ENCODE measurements at regions of chr21 and their contacts with region 1.

Region 1: GRCh38 chr21:29091032-29091431 is 17.6 kb upstream of the CCT8 start:
- DNase-seq: no peak
- H3K4me3 ChIP-seq: no peak overlapping the region
- H3K27ac ChIP-seq: no peak overlapping the region
- H3K4me1 ChIP-seq: no peaks in the 10 kb centered on the region
- H3K27me3 ChIP-seq: no peaks in the 10 kb centered on the region
- CTCF ChIP-seq: no peak

Region 2: GRCh38 chr21:29217818-29218291 is 126.8 kb after region 1 on chr21:
- intact Hi-C with region 1: no loop called
- DNase-seq: no peak
- H3K4me3 ChIP-seq: no peak overlapping the region
- H3K27ac ChIP-seq: no peak overlapping the region
- H3K4me1 ChIP-seq: no peaks in the 10 kb centered on the region
- H3K27me3 ChIP-seq: no peaks in the 10 kb centered on the region
- CTCF ChIP-seq: no peak

Region 3: GRCh38 chr21:29372063-29372802 is 281.2 kb after region 1 on chr21:
- intact Hi-C with region 1: loop called (anchors 10 kb)
- DNase-seq: peak in 4 of 5 donors; percentile 45 to 90 (median 66)
- H3K4me3 ChIP-seq: no peak overlapping the region
- H3K27ac ChIP-seq: no peak overlapping the region
- H3K4me1 ChIP-seq: no peaks in the 10 kb centered on the region
- H3K27me3 ChIP-seq: no peaks in the 10 kb centered on the region
- CTCF ChIP-seq: peak; percentile 84

Measured in kidney (tissue), 22 donors.